Calu3 (cell line): ENCODE measurements at regions of chr10 and their contacts with region 1.

Region 1: DNA sequence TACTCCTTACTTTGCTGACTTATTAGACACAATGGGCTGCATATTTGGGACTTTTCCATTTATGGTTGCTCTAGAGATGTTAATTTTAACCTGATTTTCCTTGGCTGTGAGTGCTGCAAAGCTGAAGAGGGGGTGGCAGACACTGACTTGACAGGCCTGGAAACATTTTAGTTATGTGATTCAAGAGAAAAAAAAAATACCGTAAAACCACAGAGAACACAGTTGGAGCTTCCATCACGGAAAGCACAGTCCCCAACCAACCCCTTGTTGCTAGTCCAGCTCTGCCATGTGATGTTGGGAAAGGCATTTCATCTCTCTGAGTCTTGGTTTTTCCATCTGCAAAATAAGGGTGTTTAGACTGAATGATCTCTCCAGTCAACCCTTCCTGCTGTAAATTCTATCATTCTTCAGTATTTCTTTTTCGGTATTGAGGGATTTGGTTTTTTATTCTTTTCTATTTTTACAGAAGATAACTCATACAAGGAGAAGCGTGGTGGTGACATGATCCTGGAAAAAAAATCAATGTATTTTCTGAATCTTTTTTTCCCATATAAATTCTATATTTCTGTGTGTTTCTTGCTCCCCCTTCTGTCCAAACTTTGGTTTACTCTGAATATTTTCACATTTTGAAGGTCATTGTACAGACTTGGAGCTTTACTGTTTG is 246.1 kb downstream of the REEP3 start:
- DNase-seq: no peak
- H3K4me3 Mint-ChIP-seq: no peak overlapping the region
- H3K27ac Mint-ChIP-seq: no peak overlapping the region
- H3K4me1 Mint-ChIP-seq: peaks cover 8% of the 10 kb centered on the region
- H3K27me3 Mint-ChIP-seq: no peaks in the 10 kb centered on the region
- CTCF ChIP-seq: peak; percentile 60

Region 2: GRCh38 chr10:63166742-63167258 is 600.5 kb before region 1 on chr10:
- CTCF ChIA-PET with region 1: interaction called, 14 read pairs
- intact Hi-C with region 1: loop called (anchors 1 kb)
- DNase-seq: peak; percentile 60
- H3K4me3 Mint-ChIP-seq: no peak overlapping the region
- H3K27ac Mint-ChIP-seq: no peak overlapping the region
- H3K4me1 Mint-ChIP-seq: no peaks in the 10 kb centered on the region
- H3K27me3 Mint-ChIP-seq: no peaks in the 10 kb centered on the region
- CTCF ChIP-seq: peak; percentile 55

Region 3: DNA sequence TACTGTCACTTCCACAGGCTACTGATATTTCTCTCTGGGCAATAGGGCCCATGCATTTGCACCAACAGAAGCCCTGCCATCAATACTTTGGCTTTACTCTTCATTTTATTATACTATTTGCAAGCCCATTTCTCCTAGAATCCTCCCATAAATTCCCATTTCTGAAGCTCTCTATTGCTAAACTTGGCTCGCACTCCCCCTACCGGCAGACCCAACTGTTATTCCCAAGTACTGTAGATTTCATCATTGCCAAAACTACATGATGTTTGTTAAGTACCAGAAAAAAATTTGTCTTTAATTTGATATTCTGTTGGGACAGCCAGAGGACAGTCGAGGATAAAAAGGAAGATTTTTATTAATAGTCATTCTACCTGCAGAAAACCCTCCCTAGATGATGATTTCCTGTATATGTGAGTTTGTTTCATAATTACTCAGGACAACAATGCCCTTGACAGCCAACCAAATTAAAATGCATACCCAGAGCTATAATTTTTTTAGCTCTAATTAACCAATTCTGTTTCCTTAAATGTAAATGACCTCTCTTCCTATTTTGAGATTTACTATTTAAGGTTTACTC is 52.6 kb after region 1 on chr10:
- CTCF ChIA-PET with region 1: no interaction called
- intact Hi-C with region 1: loop called (anchors 5 kb)
- DNase-seq: peak; percentile 84
- H3K4me3 Mint-ChIP-seq: no peak overlapping the region
- H3K27ac Mint-ChIP-seq: no peak overlapping the region
- H3K4me1 Mint-ChIP-seq: no peaks in the 10 kb centered on the region
- H3K27me3 Mint-ChIP-seq: peaks cover 41% of the 10 kb centered on the region
- CTCF ChIP-seq: peak; percentile 88